A549 (cell line): ENCODE measurements at regions of chr13 and their contacts with region 1.

Region 1: DNA sequence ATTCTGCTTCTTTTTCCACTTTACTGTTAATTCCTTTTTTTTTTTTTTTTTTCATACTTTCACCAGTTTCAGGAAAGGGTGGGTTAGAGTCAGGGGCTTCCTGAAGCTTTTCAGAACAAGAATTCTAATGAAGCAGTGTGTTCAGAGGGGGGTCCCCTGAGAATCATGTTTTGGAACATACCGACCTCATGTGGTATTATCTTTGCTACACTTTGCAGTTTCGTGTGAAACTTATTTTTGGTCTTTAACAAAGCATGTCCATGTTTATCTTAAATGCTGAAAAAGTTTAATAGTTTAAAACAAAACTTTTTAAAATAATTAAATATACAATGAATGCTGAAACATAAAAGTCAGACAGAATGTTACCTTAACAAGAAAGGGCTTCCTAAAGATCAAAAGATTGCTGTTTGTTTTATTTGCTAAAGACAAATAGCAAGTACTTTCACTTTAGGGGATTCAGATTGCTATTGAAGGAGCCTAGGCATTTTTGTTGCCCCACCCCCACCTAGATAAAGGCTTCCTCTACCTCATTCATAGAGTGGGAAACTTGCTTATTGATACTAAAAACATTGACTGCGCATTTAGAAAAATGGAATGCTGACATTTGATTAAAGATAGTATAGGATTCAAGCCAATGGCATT is 21.1 kb upstream of the POMP start:
- DNase-seq: no peak
- ATAC-seq: no peak
- H3K4me3 ChIP-seq: no peak overlapping the region
- H3K27ac ChIP-seq: no peak overlapping the region
- H3K4me1 ChIP-seq: no peaks in the 10 kb centered on the region
- CTCF ChIP-seq: no peak
- EP300 ChIP-seq: no peak
- POLR2A ChIP-seq: no peak
- RAD21 ChIP-seq: no peak

Region 2: DNA sequence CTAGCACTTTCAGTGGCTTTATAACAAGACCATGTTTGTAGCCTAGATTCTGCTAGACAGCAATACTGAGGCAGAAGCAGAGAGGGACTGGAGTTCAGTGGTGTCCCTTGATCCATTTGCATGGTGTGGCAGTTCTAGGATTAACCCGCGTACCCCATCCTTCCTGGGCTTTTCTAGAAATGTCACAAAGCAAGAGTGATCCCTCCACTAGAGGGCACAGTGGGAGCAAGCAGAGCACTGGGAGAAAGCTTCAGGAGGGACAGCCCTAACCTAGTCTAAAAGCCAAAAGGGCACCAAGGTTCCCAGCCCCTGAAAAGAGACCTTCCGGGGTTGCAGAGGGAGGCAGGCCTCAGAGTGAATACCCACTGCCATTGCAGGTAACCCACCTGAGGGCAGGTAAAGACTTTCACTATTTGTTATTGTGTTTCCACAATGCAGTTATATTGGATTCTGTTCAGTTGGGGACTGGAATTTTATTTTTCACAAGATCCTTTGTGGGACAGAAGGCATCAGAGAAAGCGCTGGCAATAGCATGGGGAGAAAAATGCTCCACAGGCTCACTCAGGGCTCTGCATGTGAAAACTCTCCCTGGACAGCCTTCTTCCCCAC is 313.6 kb before region 1 on chr13:
- CTCF ChIA-PET with region 1: interaction called, 12 read pairs
- POLR2A ChIA-PET with region 1: no interaction called
- DNase-seq: peak; percentile 38 to 56
- ATAC-seq: peak; percentile 89 to 93
- H3K4me3 ChIP-seq: no peak overlapping the region
- H3K27ac ChIP-seq: no peak overlapping the region
- H3K4me1 ChIP-seq: no peaks in the 10 kb centered on the region
- CTCF ChIP-seq: peak; percentile 59
- EP300 ChIP-seq: no peak
- POLR2A ChIP-seq: no peak
- RAD21 ChIP-seq: peak; percentile 66 to 73

Region 3: DNA sequence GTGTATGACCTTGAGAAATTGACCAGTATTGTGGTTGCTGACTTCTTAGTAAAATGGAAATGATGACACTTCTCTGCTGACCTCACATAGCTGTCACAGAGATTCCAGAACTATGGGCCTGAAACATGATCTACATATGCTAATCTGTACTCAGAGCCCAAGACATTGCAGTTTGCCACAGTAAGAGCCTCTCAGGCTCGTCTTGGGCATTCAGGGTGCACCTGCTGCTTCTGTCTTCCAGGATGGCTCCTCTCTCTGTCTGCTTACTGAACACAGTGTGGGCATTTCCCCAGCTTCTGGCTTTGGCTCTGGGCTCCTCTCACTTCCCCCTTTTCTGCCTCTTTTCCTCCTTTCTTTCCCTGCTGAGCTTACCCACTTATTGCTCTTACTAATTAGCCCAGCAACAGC is 103.3 kb after region 1 on chr13:
- CTCF ChIA-PET with region 1: no interaction called
- POLR2A ChIA-PET with region 1: no interaction called
- DNase-seq: no peak
- ATAC-seq: no peak
- H3K4me3 ChIP-seq: no peak overlapping the region
- H3K27ac ChIP-seq: no peak overlapping the region
- H3K4me1 ChIP-seq: peaks cover 9% of the 10 kb centered on the region; the same call in 2 of the 3 replicates
- CTCF ChIP-seq: no peak
- EP300 ChIP-seq: no peak
- POLR2A ChIP-seq: no peak
- RAD21 ChIP-seq: no peak